Lower lobe of right lung (tissue), 2 donors: ENCODE measurements at regions of chr1 and their contacts with region 1.

Region 1: DNA sequence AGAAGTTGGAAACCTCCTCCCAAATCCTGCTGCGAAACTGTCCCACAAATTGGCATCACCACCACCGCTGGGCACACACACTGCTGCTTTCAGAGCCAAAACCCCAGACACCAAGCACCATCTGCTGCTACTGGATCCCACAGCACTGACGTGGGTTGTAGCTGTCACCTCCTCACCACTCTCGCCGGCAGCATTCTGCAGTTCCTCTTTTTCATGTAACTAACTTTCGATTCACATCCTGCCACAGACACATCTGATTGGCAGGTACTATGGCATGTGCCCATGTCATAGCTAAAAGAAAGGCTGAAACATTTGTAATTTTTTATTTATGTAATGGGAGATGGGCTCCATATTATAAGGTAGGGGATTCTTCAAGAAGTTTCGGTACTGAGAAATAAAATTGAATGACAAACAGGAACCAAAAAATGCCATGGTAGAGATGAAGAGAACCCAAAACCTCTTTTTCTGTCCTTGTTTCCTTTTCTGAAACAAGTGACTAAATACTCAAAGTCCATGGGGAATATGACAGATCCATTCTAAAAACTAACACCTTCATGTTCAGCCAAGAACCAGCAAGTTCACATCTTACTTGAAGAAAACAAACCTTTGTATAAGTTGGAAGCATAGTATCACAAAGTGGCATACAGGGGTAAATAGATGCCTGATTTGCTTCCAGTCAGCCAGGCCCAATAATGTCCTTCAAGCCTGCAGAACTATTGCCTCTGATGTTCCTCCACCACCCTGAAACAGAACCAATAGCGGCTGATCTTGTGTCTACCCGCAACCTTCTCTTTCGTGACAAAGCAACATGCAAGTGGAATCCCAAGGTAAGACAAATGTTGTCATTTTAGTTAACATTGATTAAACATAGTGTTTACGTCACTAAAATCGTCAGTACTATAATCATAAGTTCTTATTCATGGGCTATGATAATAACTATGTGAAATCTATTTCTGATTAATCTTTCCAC is 26.6 kb upstream of the RGS13 start:
- DNase-seq: peak; percentile 83
- ATAC-seq: peak; percentile 84 to 94
- H3K4me3 ChIP-seq: no peak overlapping the region
- H3K27ac ChIP-seq: no peak overlapping the region
- H3K4me1 ChIP-seq: no peaks in the 10 kb centered on the region
- H3K27me3 ChIP-seq: no peaks in the 10 kb centered on the region
- CTCF ChIP-seq: no peak

Region 2: DNA sequence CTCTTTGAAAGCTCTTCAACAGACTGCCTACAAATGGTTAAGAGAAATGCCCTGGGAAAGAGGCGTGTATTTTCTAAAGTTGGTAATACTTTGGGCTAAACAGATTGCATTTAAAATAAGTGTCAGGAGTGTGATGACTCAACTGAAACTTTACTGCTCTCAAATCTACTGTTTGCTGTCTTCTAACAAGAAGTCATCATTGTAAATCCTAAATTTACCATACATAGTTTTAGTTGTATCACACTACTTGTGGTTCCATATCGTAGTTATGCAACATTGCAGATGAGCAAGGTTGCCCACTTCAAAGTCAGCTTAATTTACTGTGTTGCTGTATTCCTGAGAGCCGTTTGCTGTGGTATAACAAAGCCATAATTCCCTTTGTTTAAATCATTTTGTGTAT is 233.0 kb before region 1 on chr1:
- intact Hi-C with region 1: no loop called
- DNase-seq: no peak
- ATAC-seq: no peak
- H3K4me3 ChIP-seq: no peak overlapping the region
- H3K27ac ChIP-seq: no peak overlapping the region
- H3K4me1 ChIP-seq: no peaks in the 10 kb centered on the region
- H3K27me3 ChIP-seq: no peaks in the 10 kb centered on the region
- CTCF ChIP-seq: no peak

Region 3: GRCh38 chr1:192477630-192478029 is 131.8 kb before region 1 on chr1:
- intact Hi-C with region 1: loop called (anchors 5 kb)
- DNase-seq: no peak
- ATAC-seq: peak; percentile 72 to 79
- H3K4me3 ChIP-seq: no peak overlapping the region
- H3K27ac ChIP-seq: no peak overlapping the region
- H3K4me1 ChIP-seq: no peaks in the 10 kb centered on the region
- H3K27me3 ChIP-seq: no peaks in the 10 kb centered on the region
- CTCF ChIP-seq: peak; percentile 52

Region 4: DNA sequence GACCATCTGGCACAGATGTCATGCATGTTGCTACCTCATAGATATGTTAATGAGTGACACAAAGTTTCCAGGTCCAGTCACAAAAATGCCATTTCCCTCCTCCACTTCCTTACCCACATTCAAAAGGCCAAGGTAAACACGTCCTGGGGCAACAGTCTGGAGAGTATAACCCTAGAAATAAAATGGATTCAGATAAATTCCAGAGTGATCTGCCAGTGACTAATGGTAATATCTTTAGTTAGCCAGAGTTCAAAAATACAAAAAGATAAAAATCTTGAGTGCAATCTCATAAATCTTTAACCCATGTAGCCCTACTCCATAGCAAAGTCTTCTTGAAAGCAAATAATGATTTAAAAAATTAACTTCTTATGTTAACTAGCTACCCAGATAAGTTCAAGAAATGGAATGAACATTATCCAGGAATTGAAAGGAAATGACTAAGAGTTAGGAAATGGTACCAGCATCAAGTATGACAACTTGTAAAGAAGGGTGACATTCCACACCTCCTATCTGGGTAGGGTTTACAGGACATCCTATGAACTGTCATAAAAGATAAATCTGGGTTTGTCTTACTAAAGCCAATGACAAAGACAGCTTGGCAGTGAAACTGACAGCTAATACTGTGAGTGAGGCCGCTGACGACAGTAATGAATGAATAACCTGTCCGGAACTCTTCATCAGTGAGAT is 217.5 kb after region 1 on chr1:
- intact Hi-C with region 1: no loop called
- DNase-seq: no peak
- ATAC-seq: no peak
- H3K4me3 ChIP-seq: no peak overlapping the region
- H3K27ac ChIP-seq: no peak overlapping the region
- H3K4me1 ChIP-seq: no peaks in the 10 kb centered on the region
- H3K27me3 ChIP-seq: no peaks in the 10 kb centered on the region
- CTCF ChIP-seq: no peak